Psoas muscle (tissue), 8 donors: ENCODE measurements at regions of chr10 and their contacts with region 1.

Region 1: DNA sequence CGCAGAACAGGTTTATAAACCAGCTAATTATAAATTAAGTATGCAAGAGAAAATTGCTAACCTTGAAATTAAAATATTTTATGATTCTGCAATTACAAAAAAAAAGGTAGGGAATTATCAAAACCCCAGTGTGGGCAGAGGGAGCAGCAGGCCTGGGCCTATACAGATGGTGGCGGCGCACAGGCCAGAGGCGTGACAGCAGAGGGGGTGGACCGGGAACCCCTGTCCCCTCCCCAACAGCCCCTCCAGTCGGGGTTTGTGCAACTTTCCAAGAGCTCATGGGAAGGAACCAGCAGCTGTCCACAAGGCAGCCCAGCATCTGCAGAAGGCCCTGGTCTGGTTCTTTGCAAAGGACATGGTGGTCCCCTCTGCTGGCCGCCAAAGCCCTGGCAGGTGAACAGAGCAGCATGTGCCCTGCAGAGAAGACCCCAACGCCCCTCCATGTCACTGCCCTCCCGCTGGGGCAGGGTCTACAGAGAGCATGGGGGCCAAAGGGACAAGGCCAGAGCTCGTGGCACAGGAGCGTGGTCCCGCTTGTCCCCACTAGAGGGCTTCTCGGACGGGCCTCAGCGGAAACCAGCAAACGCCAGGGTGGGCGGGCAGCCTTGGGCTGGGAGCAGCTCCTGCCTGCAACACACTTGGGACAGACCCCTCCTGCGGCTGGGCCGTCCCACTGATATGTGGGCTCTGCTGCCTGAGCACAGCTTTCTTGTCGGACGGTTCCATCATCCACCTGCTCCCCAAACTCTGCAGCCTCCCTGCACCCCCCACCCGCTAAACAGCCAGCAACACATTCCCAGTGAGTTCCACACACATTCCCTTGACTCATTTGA is 75.1 kb downstream of the EBF3 start:
- DNase-seq: peak; percentile 67 to 86
- ATAC-seq: peak; percentile 63 to 75 (median 70)
- H3K4me3 ChIP-seq: no peak overlapping the region
- H3K27ac ChIP-seq: no peak overlapping the region
- H3K4me1 ChIP-seq: peaks cover 21% of the 10 kb centered on the region
- H3K27me3 ChIP-seq: no peaks in the 10 kb centered on the region
- CTCF ChIP-seq: peak; percentile 64

Region 2: GRCh38 chr10:129942936-129943715 is 54.1 kb after region 1 on chr10:
- intact Hi-C with region 1: loop called in 1 of 2 experiments (anchors 5 kb)
- DNase-seq: peak in 1 of 2 donors; percentile 56
- ATAC-seq: no peak
- H3K4me3 ChIP-seq: no peak overlapping the region
- H3K27ac ChIP-seq: peak overlapping the region; percentile 78
- H3K4me1 ChIP-seq: peaks cover 84% of the 10 kb centered on the region
- H3K27me3 ChIP-seq: no peaks in the 10 kb centered on the region
- CTCF ChIP-seq: no peak

Region 3: DNA sequence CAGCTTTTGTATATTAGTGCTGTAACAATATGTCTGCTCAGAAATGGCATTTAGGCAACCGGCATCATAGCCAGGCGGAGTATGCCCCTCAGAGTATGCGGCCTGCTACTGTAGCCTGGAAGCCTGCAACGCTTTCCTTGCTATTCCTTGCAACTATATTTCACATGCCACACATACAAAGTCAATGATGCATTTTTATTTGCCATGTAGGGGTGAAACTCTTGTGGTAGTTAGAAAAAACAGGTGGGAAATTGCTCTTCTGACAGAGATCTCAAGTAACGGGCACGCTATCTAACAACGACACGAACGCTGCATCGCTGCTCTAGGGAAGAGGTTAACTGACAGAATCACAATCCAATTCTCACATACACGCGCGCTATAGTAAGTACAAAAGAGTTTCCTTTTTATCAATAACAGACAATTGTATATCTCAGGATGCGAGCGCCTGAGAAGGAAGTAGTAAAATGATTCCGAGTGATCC is 69.2 kb after region 1 on chr10:
- intact Hi-C with region 1: loop called (anchors 2 to 5 kb)
- DNase-seq: peak in 1 of 2 donors; percentile 66
- ATAC-seq: peak; percentile 50 to 67 (median 58)
- H3K4me3 ChIP-seq: peak overlapping the region; percentile 83
- H3K27ac ChIP-seq: peak overlapping the region; percentile 94
- H3K4me1 ChIP-seq: peaks cover 40% of the 10 kb centered on the region
- H3K27me3 ChIP-seq: peaks cover 0 to 42% (median 1%) of the 10 kb centered on the region in 3 donors
- CTCF ChIP-seq: peak; percentile 57

Region 4: DNA sequence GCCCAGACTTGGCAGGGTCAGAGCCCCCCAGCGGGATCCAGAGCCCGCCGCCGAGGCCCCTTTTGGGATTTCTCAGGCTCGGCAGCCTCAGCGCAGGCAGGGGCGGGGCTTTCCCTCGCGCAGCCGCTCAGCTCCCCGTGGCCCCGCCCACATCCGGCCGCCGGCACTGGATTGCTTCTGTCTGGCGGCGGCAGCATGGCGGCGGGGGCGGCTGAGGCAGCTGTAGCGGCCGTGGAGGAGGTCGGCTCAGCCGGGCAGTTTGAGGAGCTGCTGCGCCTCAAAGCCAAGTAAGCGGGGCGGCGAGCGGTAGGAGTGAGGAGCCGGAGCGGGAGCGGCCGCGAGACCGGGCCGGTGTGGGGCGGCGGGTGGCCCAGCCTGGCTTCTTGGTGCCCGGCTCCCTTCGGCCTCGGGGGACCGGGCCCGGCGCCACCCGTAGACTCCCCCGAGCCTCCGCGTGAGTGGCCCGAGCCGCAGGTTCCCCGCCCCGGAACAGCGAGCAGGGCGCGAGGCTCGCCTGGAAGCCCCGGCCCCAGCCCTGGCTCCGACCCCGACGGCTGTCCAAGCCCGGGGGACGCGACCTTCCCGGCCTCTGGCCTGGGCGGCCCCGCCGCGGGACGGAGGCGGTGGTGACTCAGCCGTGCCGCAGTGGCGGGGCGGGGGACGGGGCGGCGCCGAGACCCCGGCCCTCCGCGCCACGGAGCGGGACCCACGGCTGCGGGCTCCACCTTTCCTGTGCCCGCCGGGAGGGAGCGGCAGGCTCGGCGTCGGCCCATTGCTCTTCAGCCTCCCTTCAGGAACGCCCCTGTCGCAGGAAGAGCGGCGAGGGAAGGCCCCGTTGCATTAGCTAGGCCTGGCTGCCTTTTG is 247.5 kb after region 1 on chr10 and contains the start of gene GLRX3:
- intact Hi-C with region 1: loop called in 1 of 2 experiments (anchors 10 kb)
- DNase-seq: peak; percentile 92 to 93
- ATAC-seq: peak; percentile 96 to 97 (median 96)
- H3K4me3 ChIP-seq: peak within 1 kb of the TSS; percentile 100
- H3K27ac ChIP-seq: peak within 1 kb of the TSS; percentile 91
- H3K4me1 ChIP-seq: peaks cover 35% of the 10 kb centered on the region
- H3K27me3 ChIP-seq: peaks cover 0 to 7% (median 0%) of the 10 kb centered on the region in 3 donors
- CTCF ChIP-seq: no peak
- total RNA-seq, gene GLRX3: 53.9 to 76.9 (median 56.3) TPM